Mammary epithelial cell (primary cell): ENCODE measurements at regions of chr14 and their contacts with region 1.

Region 1: GRCh38 chr14:67666750-67667449 is 7.5 kb downstream of the VTI1B start:
- DNase-seq: peak; percentile 51
- H3K4me3 ChIP-seq: no peak overlapping the region
- H3K27ac ChIP-seq: no peak overlapping the region
- H3K4me1 ChIP-seq: peaks cover 11% of the 10 kb centered on the region
- H3K27me3 ChIP-seq: no peaks in the 10 kb centered on the region
- CTCF ChIP-seq: peak; percentile 68 to 76

Region 2: DNA sequence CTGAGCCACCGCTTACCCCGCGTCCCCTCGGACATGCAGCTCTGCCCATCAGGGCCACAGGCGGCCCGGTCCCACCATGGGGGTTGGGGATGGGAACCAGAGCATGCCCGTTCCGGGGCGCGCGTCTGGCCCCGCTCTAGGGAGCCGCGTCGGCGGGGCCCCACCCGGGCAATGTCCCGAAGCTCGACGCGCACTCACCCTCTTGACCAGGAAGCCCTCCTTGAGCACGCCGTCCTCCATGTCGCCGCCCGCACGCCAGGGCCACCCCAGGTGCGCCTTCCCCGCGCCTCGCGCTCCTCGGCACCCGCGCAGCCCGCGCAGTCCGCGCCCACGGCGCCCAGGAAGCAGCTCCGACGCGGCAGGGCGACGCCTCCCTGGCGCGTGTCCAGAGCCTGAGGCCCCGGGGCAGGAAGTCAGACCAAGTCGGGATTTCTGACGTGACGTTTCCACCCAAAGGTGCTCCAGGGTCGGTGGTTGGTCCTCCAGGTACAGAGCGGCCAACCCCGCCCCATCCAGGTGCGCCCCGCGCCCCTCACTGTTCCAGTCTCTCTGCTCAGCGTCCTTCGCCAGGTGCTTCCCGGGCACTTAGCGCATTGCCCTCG is 255.0 kb before region 1 on chr14 and contains the start of gene PLEK2:
- CTCF ChIA-PET with region 1: no interaction called
- dilution Hi-C with region 1: no loop called
- in situ Hi-C with region 1: no loop called
- intact Hi-C with region 1: loop called (anchors 5 kb)
- DNase-seq: peak; percentile 92
- H3K4me3 ChIP-seq: peak within 1 kb of the TSS; percentile 58 to 92 (median 76)
- H3K27ac ChIP-seq: peak within 1 kb of the TSS; percentile 89
- H3K4me1 ChIP-seq: peaks cover 43% of the 10 kb centered on the region
- H3K27me3 ChIP-seq: no peaks in the 10 kb centered on the region
- CTCF ChIP-seq: no peak
- total RNA-seq, gene PLEK2: 9.8 to 152 TPM

Region 3: GRCh38 chr14:67526676-67527459 is 140.0 kb before region 1 on chr14:
- CTCF ChIA-PET with region 1: interaction called, 4 read pairs
- dilution Hi-C with region 1: no loop called
- in situ Hi-C with region 1: no loop called
- intact Hi-C with region 1: loop called (anchors 1 kb)
- DNase-seq: peak; percentile 51
- H3K4me3 ChIP-seq: no peak overlapping the region
- H3K27ac ChIP-seq: no peak overlapping the region
- H3K4me1 ChIP-seq: peaks cover 6% of the 10 kb centered on the region
- H3K27me3 ChIP-seq: no peaks in the 10 kb centered on the region
- CTCF ChIP-seq: peak; percentile 73 to 82

Region 4: DNA sequence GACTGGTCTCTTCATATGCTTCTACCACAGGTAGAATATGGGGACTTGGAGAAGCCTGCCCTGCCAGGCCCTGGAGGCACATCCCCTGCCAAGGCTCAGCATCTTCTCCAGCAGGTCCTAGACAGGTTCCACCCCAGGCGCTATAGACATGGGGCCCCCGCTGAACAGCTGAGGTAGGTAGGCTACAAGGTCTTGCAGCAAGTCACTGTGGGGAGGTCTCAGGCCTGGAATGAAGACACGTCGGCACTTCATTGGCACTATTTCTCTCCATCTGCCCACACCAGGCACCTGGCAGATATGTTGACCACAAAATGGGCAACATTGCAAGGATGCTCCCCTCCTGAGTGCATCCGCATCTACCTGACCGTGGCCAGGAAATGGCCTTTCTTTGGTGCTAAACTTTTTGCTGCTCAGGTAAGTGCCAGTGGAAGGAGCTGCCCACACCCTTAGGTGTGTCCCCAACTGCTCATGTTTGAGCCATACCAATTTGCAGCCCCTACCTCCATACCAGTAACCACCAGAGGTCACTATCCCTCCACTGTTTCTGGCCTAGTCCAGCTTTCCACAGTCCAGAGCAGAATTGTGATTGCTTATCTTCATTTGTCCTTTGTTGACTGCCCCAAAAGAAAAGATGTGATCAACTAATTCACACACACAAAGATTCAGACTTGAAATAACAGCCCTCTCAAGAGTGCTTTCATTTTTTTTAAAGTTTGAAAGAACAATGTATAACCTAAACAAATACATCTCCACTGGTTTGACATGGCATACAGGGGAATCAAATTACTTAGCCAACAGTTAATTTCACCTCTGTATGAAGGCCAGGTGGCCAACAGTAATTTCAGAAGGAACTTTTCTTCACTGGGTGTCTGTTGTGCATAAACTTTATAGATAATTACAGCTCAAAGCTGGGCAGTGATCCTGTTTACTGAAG is 82.9 kb before region 1 on chr14:
- CTCF ChIA-PET with region 1: interaction called, 4 read pairs
- dilution Hi-C with region 1: no loop called
- in situ Hi-C with region 1: no loop called
- intact Hi-C with region 1: loop called (anchors 1 kb)
- DNase-seq: peak; percentile 32
- H3K4me3 ChIP-seq: no peak overlapping the region
- H3K27ac ChIP-seq: no peak overlapping the region
- H3K4me1 ChIP-seq: no peaks in the 10 kb centered on the region
- H3K27me3 ChIP-seq: no peaks in the 10 kb centered on the region
- CTCF ChIP-seq: peak; percentile 65 to 83

Region 5: DNA sequence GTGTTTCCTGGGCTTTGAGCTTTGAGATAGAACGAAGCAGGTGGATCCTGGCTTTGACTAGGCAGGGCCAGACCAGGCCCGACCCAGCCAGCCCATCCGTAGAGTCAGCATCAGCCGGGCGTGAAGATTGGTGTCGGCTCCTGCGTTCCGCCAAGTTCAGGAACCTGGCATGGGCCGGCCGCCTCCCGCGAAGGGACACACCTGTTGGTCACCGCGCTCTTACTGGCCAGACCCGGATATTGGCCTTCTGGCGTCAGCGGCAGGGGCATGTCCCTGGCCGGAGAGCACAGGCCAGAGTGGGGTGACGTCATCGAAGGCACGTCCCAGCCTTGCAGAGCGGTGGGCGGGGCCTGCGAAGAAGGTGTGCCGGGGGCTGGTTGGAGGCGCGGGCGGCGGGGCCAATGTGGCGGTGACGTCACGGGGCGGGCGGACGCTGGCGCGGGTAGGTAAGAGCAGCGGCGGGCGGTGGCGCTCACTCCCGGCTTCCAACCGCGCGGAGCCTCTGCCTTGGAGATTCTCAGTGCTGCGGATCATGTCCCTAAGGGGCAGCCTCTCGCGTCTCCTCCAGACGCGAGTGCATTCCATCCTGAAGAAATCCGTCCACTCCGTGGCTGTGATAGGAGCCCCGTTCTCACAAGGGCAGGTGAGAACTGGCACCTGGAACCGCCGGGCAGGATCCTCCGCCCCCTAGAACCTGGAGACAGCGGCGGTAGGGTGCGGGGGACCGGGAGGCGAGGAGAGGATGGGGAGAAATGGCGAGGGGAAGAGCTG is 47.3 kb before region 1 on chr14 and contains the start of gene ARG2:
- CTCF ChIA-PET with region 1: interaction called, 19 read pairs
- dilution Hi-C with region 1: no loop called
- in situ Hi-C with region 1: loop called (anchors 5 kb)
- intact Hi-C with region 1: loop called (anchors 1 kb)
- DNase-seq: peak; percentile 95
- H3K4me3 ChIP-seq: peak within 1 kb of the TSS; percentile 73 to 85 (median 81)
- H3K27ac ChIP-seq: peak within 1 kb of the TSS; percentile 69
- H3K4me1 ChIP-seq: peaks cover 28% of the 10 kb centered on the region
- H3K27me3 ChIP-seq: no peaks in the 10 kb centered on the region
- CTCF ChIP-seq: peak in 1 of 2 donors; percentile 13
- total RNA-seq, gene ARG2: 5.0 to 19.1 TPM